Heart right ventricle (tissue), 16 donors: ENCODE measurements at regions of chrX and their contacts with region 1.

Region 1: GRCh38 chrX:2707334-2707760 is 16.3 kb downstream of the CD99 start:
- DNase-seq: peak; percentile 34 to 55
- ATAC-seq: peak in 7 of 8 donors; percentile 10 to 50 (median 43)
- H3K4me3 ChIP-seq: peak overlapping the region in 2 of 10 donors; percentile 2 to 9
- H3K27ac ChIP-seq: peak overlapping the region in 7 of 10 donors; percentile 13 to 74 (median 46)
- H3K4me1 ChIP-seq: peaks cover 34 to 95% (median 83%) of the 10 kb centered on the region in 9 donors
- H3K27me3 ChIP-seq: no peaks in the 10 kb centered on the region
- CTCF ChIP-seq: no peak

Region 2: DNA sequence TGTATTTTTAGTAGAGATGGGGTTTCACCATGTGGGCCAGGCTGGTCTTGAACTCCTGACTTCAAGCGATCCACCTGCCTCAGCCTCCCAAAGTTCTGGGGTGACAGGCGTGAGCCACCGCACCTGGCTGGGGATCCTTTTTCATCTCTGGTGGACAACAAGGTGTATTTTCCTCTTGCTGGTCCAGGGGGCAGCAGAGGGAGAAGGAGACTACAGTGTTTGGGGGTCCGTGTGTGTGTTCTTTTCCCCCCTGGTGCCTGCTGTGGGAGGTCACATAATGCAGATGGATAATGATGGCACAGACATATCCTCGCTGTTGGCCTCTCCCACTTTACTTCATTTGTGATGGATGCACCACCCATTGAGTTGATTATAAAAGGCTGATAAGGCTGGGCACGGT is 55.2 kb before region 1 on chrX:
- intact Hi-C with region 1: loop called in 1 of 10 experiments (anchors 5 kb)
- DNase-seq: no peak
- ATAC-seq: no peak
- H3K4me3 ChIP-seq: no peak overlapping the region
- H3K27ac ChIP-seq: no peak overlapping the region
- H3K4me1 ChIP-seq: peaks cover 0 to 4% (median 0%) of the 10 kb centered on the region in 9 donors
- H3K27me3 ChIP-seq: no peaks in the 10 kb centered on the region
- CTCF ChIP-seq: peak in 2 of 9 donors; percentile 14 to 22

Region 3: DNA sequence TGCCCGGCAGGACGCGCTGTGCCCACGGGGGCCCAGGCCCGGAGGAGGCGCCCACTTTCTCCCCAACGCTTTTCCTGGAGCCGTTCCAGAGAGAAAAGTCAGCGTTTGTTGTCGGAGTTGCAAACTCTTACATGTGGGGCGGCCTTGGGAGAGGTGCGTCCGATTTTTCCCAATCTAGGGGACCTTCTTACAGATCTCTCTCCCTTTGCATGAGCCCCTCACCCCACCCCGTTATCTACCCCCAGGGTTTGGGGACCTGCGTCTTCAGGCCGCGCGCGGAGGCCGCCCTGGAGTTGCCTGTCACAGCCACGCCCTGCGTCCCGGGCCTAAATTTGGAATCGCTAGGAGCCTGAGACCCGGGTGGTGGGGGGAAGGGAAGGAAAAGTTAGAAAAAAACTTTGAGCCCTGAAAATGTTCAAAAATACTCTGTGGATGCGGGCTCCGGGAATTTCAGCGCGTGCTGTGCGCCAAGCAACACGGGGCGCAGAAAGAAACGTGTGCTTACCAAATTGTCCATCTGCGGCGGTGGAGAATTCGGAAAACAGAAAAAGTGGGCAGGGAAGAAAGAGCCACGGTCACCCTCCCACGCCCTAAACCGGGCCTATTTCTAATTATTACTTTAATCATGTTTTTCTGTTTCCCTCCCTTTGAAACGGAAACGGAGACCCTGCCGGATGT is 15.7 kb before region 1 on chrX:
- intact Hi-C with region 1: loop called in 1 of 10 experiments (anchors 1 kb)
- DNase-seq: peak; percentile 74 to 79
- ATAC-seq: peak; percentile 39 to 77 (median 61)
- H3K4me3 ChIP-seq: peak overlapping the region; percentile 77 to 100 (median 96)
- H3K27ac ChIP-seq: peak overlapping the region; percentile 88 to 95 (median 93)
- H3K4me1 ChIP-seq: peaks cover 40 to 53% (median 45%) of the 10 kb centered on the region in 9 donors
- H3K27me3 ChIP-seq: peaks cover 0 to 13% (median 0%) of the 10 kb centered on the region in 7 donors
- CTCF ChIP-seq: no peak

Region 4: GRCh38 chrX:2819345-2820135 is 112.2 kb after region 1 on chrX:
- intact Hi-C with region 1: loop called in 1 of 10 experiments (anchors 10 kb)
- DNase-seq: no peak
- ATAC-seq: no peak
- H3K4me3 ChIP-seq: no peak overlapping the region
- H3K27ac ChIP-seq: no peak overlapping the region
- H3K4me1 ChIP-seq: no peaks in the 10 kb centered on the region
- H3K27me3 ChIP-seq: peaks cover 0 to 27% (median 0%) of the 10 kb centered on the region in 7 donors
- CTCF ChIP-seq: peak in 8 of 9 donors; percentile 13 to 59 (median 48)